ENCODE measurements at regions of chr7 and their contacts with region 1.

Region 1: DNA sequence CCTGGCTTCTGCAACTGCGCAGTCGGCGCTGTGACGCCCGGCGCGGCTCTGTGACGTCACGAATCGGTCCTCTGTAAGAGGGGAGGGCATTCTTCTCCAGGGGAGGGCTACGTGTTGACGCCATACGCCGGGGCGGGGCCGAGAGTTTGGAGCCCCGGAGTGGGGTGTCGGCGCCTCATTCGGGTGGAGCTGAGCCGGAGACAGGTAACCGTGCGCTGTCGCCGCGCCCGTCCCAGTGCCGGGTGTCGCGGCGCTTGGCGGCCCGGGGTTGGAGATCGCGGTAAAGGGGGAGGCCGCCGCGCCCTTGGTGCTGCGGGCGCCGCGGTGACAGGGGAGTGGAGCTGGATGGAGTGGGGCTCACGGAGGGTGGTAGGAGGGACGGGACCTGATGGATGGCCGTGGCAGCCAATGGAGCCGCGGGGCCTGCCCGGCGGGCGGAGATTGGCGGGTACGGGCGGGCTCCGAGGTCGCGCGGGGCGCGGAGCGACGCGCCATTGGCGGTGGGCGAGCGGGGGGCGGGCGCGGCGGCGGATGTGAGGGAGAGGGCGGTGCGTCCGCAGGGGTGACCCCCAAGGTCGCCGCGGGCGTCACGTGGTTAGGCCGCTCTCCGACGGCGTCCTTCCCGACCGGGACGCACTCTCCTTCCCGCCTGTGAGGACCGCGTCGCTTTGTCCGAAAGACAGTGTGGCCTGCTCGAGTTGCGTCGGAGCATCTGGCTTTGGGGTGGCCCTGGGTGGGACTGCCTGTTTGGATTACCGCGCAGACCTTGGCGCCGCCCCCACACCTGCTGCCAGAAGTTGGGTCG is at the start of gene OGDH:
- H3K4me3 ChIP-seq: peak within 1 kb of the TSS; percentile 98
- H3K27ac ChIP-seq: peak within 1 kb of the TSS; percentile 86
- H3K4me1 ChIP-seq: no peaks in the 10 kb centered on the region
- CTCF ChIP-seq: no peak

Region 2: GRCh38 chr7:44559485-44559884 is 47.2 kb before region 1 on chr7:
- CTCF ChIA-PET with region 1: no interaction called
- POLR2A ChIA-PET with region 1: no interaction called
- H3K4me3 ChIP-seq: no peak overlapping the region
- H3K27ac ChIP-seq: no peak overlapping the region
- H3K4me1 ChIP-seq: no peaks in the 10 kb centered on the region; the same call in 1 of the 2 replicates
- CTCF ChIP-seq: no peak

Region 3: DNA sequence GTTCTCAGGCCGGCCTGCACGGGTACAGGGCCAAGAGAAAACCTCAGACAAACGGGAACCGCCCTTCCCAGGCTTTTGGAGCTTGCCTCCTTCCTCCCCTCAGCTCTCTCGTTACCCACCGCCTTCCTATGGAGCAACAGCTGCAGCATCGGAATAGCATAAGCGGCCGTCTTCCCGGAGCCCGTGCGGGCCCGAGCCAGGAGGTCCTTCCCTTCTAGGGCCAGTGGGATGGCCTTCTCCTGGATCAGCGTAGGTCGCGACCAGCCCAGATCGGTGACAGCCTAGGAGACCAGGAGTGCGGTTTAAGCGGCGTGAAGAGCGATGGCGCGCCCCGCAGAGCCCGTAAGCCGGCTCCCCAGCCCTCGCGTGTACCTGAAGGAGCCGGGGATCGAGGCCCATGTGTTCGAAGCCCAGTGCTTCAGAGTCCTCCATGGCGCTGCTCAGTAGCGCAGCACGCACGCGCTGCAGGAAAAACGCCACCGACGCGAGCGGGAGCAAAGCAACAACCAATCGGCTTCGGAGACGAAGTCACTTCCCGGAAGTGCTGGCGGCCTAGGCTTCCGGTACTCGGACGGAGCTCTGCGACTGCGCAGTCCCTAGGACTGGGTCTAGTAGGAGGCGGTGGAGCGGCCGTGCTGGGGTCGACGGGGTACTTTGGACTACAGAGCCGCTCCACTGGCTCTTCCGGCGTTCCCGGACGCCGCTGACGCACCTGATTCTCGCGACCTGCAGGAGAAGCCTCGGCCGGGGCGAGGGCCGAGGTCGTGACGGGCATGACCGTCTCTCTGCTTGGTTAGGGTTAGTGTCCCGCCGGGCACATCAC is 33.0 kb before region 1 on chr7 and contains the start of gene DDX56:
- CTCF ChIA-PET with region 1: no interaction called
- POLR2A ChIA-PET with region 1: interaction called, 12 read pairs
- H3K4me3 ChIP-seq: peak within 1 kb of the TSS; percentile 59
- H3K27ac ChIP-seq: peak within 1 kb of the TSS; percentile 80
- H3K4me1 ChIP-seq: no peaks in the 10 kb centered on the region
- CTCF ChIP-seq: no peak; the same call in 1 of the 2 replicates

Region 4: GRCh38 chr7:44581879-44582603 is 24.6 kb before region 1 on chr7 and contains the start of gene TMED4:
- CTCF ChIA-PET with region 1: interaction called, 3 read pairs
- POLR2A ChIA-PET with region 1: interaction called, 14 read pairs
- H3K4me3 ChIP-seq: peak within 1 kb of the TSS; percentile 88
- H3K27ac ChIP-seq: peak within 1 kb of the TSS; percentile 94
- H3K4me1 ChIP-seq: no peaks in the 10 kb centered on the region
- CTCF ChIP-seq: peak; percentile 45; the same call in 1 of the 2 replicates

Region 5: DNA sequence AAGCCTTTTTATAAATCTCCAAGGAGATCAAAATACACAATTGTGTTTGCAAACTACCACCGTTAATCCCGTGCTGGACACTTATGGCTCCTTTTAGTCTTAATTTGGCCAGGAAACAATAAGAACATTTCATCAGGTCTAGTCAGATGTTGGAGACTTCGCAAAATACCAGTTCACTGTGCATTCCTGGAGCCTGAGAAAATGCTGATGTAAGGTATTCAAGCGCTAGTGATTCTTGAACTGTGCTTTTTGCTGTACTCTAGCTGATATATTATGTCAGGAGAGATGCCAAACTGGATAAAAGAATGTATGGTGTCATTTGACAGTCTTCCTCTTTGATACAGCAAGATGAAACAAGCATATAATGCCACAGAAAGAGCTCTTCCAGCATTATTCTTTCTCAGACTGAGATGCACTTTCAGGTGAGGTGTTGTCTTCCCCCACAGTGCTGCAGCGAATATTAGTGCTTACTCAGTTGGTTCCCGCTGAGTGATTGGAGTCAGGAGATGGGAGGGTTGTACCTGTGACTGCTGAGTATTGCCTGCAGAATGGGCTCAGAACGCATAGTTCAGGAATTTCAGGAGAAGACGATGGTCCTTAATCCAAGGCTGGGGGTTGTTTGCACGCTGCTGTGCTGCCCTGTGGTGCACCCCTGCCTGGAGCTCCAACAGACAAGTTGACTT is 59.0 kb after region 1 on chr7:
- CTCF ChIA-PET with region 1: no interaction called
- POLR2A ChIA-PET with region 1: no interaction called
- H3K4me3 ChIP-seq: no peak overlapping the region
- H3K27ac ChIP-seq: no peak overlapping the region
- H3K4me1 ChIP-seq: no peaks in the 10 kb centered on the region; the same call in 1 of the 2 replicates
- CTCF ChIP-seq: no peak

Region 6: GRCh38 chr7:44748045-44748947 is 141.6 kb after region 1 on chr7 and contains the start of gene ZMIZ2:
- CTCF ChIA-PET with region 1: no interaction called
- POLR2A ChIA-PET with region 1: interaction called, 12 read pairs
- H3K4me3 ChIP-seq: peak within 1 kb of the TSS; percentile 92
- H3K27ac ChIP-seq: peak within 1 kb of the TSS; percentile 71
- H3K4me1 ChIP-seq: no peaks in the 10 kb centered on the region; the same call in 1 of the 2 replicates
- CTCF ChIP-seq: no peak

Measured in HEK293 (cell line).